Activated T-helper 2 cell treated with anti-CD3 and anti-CD28 coated beads, Interferon-gamma antibody, Interleukin-2, Interleukin-4, amounts not matched to agents 10 μg/mL and 5 μg/mL and 100 μg/mL, durations not matched to agents 14 hours and 24 hours and 36 hours (primary cell): ENCODE measurements at regions of chr6 and their contacts with region 1.

Region 1: DNA sequence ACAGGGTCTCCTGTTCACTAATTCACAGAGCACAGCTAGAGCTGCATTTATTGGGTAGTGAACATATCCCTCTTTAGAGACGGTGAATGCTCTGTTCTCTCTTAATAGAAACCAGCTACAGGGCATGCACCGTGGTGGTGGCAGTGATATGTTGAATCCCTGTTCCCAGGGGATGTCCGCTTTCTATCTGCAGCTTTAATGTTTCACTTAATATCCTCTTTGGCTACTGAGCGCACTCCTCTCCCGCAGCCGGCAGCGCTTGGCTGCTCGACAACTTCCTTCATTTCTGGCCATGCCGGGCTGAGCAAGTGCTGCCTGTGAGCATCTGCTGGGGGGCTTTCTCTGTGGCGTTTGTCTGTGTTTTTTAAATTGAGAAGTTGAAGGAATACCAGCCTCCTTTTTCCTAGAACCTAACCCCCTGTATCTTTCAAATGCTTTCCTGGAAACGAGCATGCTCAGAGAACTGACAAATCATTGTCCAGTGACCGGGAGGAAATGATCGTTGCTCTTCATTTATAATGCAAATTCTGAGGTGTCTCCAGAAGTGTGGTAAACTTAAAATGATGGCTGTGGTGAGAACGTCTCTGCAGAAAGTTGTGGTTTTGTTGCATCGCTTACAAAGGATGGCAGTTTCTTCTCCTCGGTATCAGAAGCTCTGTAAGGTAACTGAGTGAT is 297.9 kb downstream of the UTRN start:
- DNase-seq: peak; percentile 63
- H3K4me3 Mint-ChIP-seq: peak overlapping the region; percentile 81
- H3K27ac Mint-ChIP-seq: peak overlapping the region; percentile 93
- H3K4me1 Mint-ChIP-seq: peaks cover 66% of the 10 kb centered on the region
- H3K27me3 Mint-ChIP-seq: no peaks in the 10 kb centered on the region

Region 2: DNA sequence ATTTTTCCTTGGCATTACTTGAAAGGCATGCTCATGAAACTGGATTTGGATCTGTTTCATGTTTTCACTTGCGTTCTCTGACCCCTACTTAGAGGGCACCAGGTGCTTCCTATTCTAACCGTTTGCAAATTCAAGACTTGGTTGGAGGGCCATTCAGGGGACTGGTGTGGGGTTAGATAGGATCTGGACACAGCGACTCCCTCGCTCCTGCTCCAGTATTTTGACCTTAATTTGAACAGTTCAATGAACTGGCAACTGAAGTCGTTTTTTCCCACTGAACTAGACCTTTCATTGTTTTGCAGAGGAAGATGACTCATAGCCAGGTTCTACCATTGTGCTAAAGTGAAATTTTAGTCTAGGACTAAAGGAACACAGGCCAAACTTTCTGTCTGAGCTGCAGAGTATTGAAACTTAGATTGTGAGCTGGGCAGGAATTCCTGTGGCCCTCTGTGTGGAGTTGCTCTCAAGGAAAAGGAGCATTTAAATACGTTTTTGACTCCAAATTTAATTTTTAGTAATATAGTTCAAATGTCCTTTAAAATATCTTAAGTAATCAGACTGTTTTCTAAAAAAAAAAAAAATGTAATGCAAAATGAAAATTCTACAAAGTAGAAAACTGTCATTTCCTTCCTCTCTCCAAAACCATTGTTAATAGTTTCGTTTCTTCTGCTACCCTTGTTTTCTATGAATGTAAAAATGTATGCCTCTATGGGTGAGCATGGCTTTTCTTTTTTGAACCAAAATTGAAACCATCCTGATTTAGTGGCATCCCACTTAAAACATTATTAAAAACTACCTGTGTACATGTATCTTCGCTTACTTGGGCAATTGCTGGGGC is 233.2 kb before region 1 on chr6:
- intact Hi-C with region 1: loop called (anchors 5 kb)
- DNase-seq: no peak
- H3K4me3 Mint-ChIP-seq: peak overlapping the region; percentile 80
- H3K27ac Mint-ChIP-seq: peak overlapping the region; percentile 95
- H3K4me1 Mint-ChIP-seq: peaks cover 74% of the 10 kb centered on the region
- H3K27me3 Mint-ChIP-seq: no peaks in the 10 kb centered on the region

Region 3: DNA sequence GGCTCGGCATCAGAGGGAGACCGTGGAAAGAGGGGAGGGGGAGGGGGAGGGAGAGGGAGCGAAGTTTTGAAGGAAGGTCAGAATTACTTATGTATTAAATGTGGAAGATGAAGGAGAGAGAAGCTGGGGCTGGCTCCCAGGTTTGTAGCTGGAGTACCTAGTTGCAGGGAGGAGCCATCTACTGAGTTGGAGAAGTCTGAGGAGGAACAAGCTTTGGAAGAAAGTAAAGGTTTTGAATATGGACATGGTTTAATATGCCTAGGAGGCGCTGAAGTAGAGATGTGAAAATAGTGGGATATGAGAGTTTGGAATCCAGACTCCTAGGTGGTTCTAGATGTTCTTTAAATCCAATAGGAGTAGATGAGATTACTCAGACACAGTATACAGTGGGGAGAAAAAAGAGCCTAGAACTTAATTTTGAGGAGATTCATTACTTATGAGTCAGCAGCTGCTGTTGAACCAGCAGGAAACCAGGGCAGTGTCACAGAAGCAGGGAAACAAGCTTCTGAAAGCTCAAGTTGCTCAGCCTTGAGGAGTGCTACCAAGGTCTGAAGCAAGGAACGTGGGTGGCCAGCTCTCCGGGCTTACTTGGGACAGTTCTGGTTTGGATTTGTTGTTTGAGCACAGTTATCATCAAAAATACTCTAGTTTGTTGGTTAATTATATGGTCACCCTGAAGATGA is 148.6 kb before region 1 on chr6:
- intact Hi-C with region 1: no loop called
- DNase-seq: no peak
- H3K4me3 Mint-ChIP-seq: no peak overlapping the region
- H3K27ac Mint-ChIP-seq: peak overlapping the region; percentile 18
- H3K4me1 Mint-ChIP-seq: peaks cover 8% of the 10 kb centered on the region
- H3K27me3 Mint-ChIP-seq: no peaks in the 10 kb centered on the region

Region 4: GRCh38 chr6:144602523-144603180 is 19.6 kb after region 1 on chr6:
- intact Hi-C with region 1: loop called (anchors 1 kb)
- DNase-seq: no peak
- H3K4me3 Mint-ChIP-seq: no peak overlapping the region
- H3K27ac Mint-ChIP-seq: peak overlapping the region; percentile 67
- H3K4me1 Mint-ChIP-seq: peaks cover 49% of the 10 kb centered on the region
- H3K27me3 Mint-ChIP-seq: no peaks in the 10 kb centered on the region

Region 5: DNA sequence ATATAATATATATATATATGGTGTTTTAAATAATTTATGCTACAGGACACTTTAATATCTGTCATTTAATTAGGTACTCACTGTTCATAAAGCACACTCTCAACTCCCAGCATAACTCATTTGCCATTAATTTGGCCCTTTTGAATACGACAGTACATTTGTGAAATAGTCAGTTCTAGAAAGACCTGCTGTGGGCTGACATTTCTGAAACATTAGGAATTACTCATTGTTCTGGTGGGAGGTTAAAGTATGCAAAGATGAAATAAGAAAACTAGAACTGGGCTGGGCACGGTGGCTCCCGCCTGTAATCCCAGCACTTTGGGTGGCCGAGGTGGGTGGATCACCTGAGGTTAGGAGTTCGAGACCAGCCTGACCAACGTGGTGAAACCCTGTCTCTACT is 199.6 kb after region 1 on chr6:
- intact Hi-C with region 1: loop called (anchors 5 kb)
- DNase-seq: no peak
- H3K4me3 Mint-ChIP-seq: no peak overlapping the region
- H3K27ac Mint-ChIP-seq: no peak overlapping the region
- H3K4me1 Mint-ChIP-seq: peaks cover 2% of the 10 kb centered on the region
- H3K27me3 Mint-ChIP-seq: no peaks in the 10 kb centered on the region

Region 6: GRCh38 chr6:145028144-145028818 is 445.2 kb after region 1 on chr6:
- intact Hi-C with region 1: loop called (anchors 1 kb)
- DNase-seq: no peak
- H3K4me3 Mint-ChIP-seq: no peak overlapping the region
- H3K27ac Mint-ChIP-seq: no peak overlapping the region
- H3K4me1 Mint-ChIP-seq: peaks cover 2% of the 10 kb centered on the region
- H3K27me3 Mint-ChIP-seq: peaks cover 30% of the 10 kb centered on the region